ENCODE measurements at regions of chr18 and their contacts with region 1.

Region 1: DNA sequence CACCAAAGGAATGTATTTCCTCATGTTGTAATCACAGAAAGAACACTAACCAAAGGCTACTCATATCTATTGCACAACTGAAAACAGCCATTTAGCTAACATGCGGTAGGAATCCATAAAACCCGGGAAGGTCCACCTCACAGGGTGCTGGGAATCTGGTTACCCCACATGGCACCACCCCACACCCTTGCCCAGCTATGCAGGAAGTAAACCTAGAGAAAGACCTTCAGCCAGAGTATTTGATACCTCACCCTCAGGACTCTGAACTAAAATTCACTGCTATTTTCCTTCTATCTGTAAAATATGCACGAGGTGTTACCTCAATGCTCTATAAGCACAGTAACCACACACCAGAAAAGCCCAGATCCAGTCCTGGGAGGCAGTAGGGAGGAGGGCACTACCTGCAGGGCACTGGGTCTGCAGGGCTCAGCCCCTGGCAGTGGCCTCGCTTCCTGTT is 45.8 kb downstream of the PTPN2 start:
- DNase-seq: peak; percentile 31
- H3K4me3 ChIP-seq: peak overlapping the region; percentile 46
- H3K27ac ChIP-seq: peak overlapping the region; percentile 18
- H3K4me1 ChIP-seq: peaks cover 39% of the 10 kb centered on the region
- CTCF ChIP-seq: no peak

Region 2: GRCh38 chr18:12750076-12750714 is 88.0 kb before region 1 on chr18:
- CTCF ChIA-PET with region 1: no interaction called
- POLR2A ChIA-PET with region 1: interaction called, 3 read pairs
- intact Hi-C with region 1: loop called (anchors 5 kb)
- DNase-seq: peak; percentile 95
- H3K4me3 ChIP-seq: peak overlapping the region; percentile 15
- H3K27ac ChIP-seq: peak overlapping the region; percentile 62
- H3K4me1 ChIP-seq: peaks cover 40% of the 10 kb centered on the region
- CTCF ChIP-seq: no peak

Region 3: GRCh38 chr18:12816451-12816850 is 21.8 kb before region 1 on chr18:
- CTCF ChIA-PET with region 1: no interaction called
- POLR2A ChIA-PET with region 1: no interaction called
- intact Hi-C with region 1: no loop called
- DNase-seq: no peak
- H3K4me3 ChIP-seq: no peak overlapping the region
- H3K27ac ChIP-seq: no peak overlapping the region
- H3K4me1 ChIP-seq: no peaks in the 10 kb centered on the region
- CTCF ChIP-seq: no peak

Region 4: GRCh38 chr18:12883684-12884405 is 45.6 kb after region 1 on chr18 and contains the start of gene PTPN2:
- CTCF ChIA-PET with region 1: interaction called, 6 read pairs
- POLR2A ChIA-PET with region 1: interaction called, 5 read pairs
- intact Hi-C with region 1: loop called (anchors 1 kb)
- DNase-seq: peak; percentile 95
- H3K4me3 ChIP-seq: peak within 1 kb of the TSS; percentile 78
- H3K27ac ChIP-seq: peak within 1 kb of the TSS; percentile 86
- H3K4me1 ChIP-seq: peaks cover 61% of the 10 kb centered on the region
- CTCF ChIP-seq: no peak
- total RNA-seq, gene PTPN2: 69.7 and 85.0 TPM in 2 replicates